PC-9 (cell line): ENCODE measurements at regions of chr16 and their contacts with region 1.

Region 1: DNA sequence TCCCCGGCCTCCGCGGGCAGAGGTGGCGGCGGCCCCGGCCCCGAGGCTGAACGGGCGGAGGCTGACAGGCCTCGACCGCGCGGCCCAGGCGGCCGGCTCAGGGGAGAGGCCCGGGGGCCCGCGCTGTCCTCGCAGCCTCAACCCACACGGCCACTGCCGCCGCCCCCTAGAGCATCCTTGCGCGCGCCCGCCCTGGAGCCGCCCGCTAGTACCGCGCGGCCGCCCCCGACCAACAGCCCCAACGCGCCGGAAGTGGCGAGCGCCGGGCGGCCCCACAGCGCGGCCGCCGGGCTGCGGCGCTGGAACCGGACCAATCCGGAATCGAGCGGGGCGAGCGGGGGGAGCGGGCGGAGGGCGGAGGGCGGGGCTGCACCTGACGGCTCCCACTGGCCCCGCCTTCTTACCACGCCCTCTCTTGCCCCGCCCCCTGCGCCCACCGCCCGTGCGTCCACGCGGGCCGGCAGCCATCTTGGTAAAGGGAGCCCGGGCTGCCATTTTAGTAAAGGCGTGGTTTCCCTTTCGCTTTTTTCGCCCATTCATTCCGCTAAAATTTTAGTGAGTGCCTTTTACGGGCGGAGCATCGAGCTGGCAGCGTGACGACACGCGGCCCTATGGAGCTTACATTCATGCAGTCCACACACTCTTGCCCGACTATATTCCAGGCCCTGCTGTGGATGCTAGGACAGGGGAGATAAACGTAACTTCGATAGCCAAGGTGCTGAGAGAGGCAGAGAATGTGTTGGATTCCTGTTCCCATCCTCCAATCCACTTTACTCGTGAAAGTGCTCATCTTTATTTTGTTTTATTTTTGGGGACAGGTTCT is at the start of gene XPO6:
- DNase-seq: peak; percentile 81 to 99
- H3K4me3 ChIP-seq: peak within 1 kb of the TSS; percentile 89
- H3K27ac ChIP-seq: peak within 1 kb of the TSS; percentile 32; the same call in 1 of the 2 replicates
- H3K4me1 ChIP-seq: peaks cover 25% of the 10 kb centered on the region
- H3K27me3 ChIP-seq: no peaks in the 10 kb centered on the region
- CTCF ChIP-seq: no peak
- total RNA-seq, gene XPO6: 154 and 221 TPM in 2 replicates

Region 2: GRCh38 chr16:28193530-28194423 is 18.1 kb before region 1 on chr16:
- CTCF ChIA-PET with region 1: no interaction called
- POLR2A ChIA-PET with region 1: no interaction called
- intact Hi-C with region 1: loop called (anchors 1 kb)
- DNase-seq: peak; percentile 84 to 98
- H3K4me3 ChIP-seq: no peak overlapping the region
- H3K27ac ChIP-seq: peak overlapping the region; percentile 75
- H3K4me1 ChIP-seq: peaks cover 73% of the 10 kb centered on the region
- H3K27me3 ChIP-seq: no peaks in the 10 kb centered on the region
- CTCF ChIP-seq: no peak

Region 3: DNA sequence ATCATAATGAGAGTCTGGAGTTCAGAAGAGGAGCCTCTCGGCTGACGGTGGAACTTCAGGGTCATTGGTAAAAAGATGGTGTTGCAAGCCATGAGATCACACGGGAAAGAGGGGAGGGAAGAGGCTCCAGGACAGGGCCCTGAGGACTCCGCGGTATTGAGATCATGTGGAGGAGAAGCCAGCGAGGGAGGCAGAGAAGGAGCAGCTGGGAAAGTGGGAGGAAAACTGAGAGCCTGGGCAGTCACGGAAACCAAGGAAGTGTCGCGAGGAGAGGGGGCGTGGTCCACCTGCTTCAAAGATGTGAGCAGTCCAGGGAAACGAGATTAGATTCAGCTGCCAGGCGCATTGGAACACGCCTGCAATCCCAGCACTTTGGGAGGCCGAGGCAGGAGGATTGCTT is 52.7 kb after region 1 on chr16:
- CTCF ChIA-PET with region 1: interaction called, 3 read pairs
- POLR2A ChIA-PET with region 1: no interaction called
- intact Hi-C with region 1: loop called (anchors 1 kb)
- DNase-seq: peak; percentile 63 to 68
- H3K4me3 ChIP-seq: no peak overlapping the region; the same call in 1 of the 2 replicates
- H3K27ac ChIP-seq: no peak overlapping the region
- H3K4me1 ChIP-seq: peaks cover 6% of the 10 kb centered on the region; the same call in 1 of the 2 replicates
- H3K27me3 ChIP-seq: no peaks in the 10 kb centered on the region
- CTCF ChIP-seq: no peak